ENCODE measurements at regions of chr1 and their contacts with region 1.

Region 1: GRCh38 chr1:246753670-246754535 is 29.7 kb downstream of the SCCPDH start:
- DNase-seq: peak; percentile 85
- H3K4me3 Mint-ChIP-seq: no peak overlapping the region
- H3K27ac Mint-ChIP-seq: no peak overlapping the region
- H3K4me1 Mint-ChIP-seq: peaks cover 10% of the 10 kb centered on the region
- H3K27me3 Mint-ChIP-seq: no peaks in the 10 kb centered on the region
- CTCF ChIP-seq: peak; percentile 98

Region 2: DNA sequence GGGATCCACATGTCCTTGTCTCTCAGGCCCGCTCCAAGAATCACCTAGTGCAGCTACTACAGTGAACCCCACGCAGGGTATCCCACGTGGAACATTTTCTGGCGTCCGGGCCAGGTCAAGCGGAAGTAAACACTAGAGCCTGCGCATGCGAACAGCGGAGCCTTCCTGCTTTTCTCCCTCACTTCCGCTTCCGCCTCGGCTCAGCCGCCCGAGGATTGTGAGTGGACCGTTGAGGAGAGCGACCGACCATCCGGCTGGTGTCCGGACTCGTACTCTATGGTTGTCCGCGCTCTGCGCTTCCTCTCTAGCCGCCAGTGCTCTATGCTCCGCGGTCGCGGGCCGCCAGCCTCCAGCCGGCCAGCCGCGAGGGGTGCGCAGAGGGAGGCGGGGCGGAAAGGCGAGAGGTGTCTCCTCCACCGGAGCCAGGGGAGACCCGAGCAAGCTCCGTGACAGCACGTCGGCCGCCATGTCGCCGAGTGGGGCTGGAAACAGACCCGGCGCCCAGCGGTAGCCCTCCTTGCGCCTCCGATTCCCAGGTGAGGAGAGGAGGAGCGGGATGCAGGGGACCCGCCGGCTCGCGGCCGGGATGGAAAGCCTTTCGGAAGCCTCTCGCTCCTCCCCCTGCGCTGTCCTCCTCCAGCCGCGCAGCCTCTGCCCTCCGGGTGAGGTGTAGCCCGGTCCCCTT is 187.6 kb before region 1 on chr1 and contains the starts of genes CNST and TFB2M:
- CTCF ChIA-PET with region 1: interaction called, 6 read pairs
- POLR2A ChIA-PET with region 1: interaction called, 3 read pairs
- intact Hi-C with region 1: loop called (anchors 1 kb)
- DNase-seq: peak; percentile 100
- H3K4me3 Mint-ChIP-seq: peak within 1 kb of the TSS; percentile 93
- H3K27ac Mint-ChIP-seq: peak within 1 kb of the TSS; percentile 97
- H3K4me1 Mint-ChIP-seq: peaks cover 34% of the 10 kb centered on the region
- H3K27me3 Mint-ChIP-seq: no peaks in the 10 kb centered on the region
- CTCF ChIP-seq: no peak
- total RNA-seq, gene CNST: 44.8 and 48.3 TPM in 2 replicates
- total RNA-seq, gene TFB2M: 38.3 and 52.0 TPM in 2 replicates

Region 3: DNA sequence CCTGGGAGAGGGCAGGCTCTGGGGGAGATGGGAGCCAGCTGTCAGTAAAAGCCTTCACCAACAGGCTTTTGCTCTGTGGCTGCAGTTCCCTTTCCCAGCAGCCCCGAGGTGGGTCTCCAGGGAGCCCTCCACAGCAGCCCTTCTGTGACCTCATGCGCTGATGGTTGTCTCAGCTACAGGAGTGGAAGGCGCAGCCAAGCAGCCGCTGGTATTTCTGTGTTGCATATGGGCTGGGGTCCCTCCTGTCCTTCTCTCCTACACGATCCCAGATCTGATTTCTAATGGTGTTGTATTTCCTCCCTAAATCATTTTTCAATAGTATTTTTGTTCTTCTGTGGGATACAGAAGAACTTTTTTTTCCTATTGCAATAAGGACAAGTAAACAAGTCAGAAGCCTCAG is 72.0 kb before region 1 on chr1:
- CTCF ChIA-PET with region 1: interaction called, 464 read pairs
- POLR2A ChIA-PET with region 1: interaction called, 3 read pairs
- intact Hi-C with region 1: no loop called
- DNase-seq: no peak
- H3K4me3 Mint-ChIP-seq: no peak overlapping the region
- H3K27ac Mint-ChIP-seq: no peak overlapping the region
- H3K4me1 Mint-ChIP-seq: no peaks in the 10 kb centered on the region
- H3K27me3 Mint-ChIP-seq: no peaks in the 10 kb centered on the region
- CTCF ChIP-seq: no peak

Region 4: GRCh38 chr1:246709835-246710234 is 44.1 kb before region 1 on chr1:
- CTCF ChIA-PET with region 1: interaction called, 28 read pairs
- POLR2A ChIA-PET with region 1: no interaction called
- intact Hi-C with region 1: no loop called
- DNase-seq: no peak
- H3K4me3 Mint-ChIP-seq: no peak overlapping the region
- H3K27ac Mint-ChIP-seq: no peak overlapping the region
- H3K4me1 Mint-ChIP-seq: peaks cover 20% of the 10 kb centered on the region
- H3K27me3 Mint-ChIP-seq: no peaks in the 10 kb centered on the region
- CTCF ChIP-seq: no peak

Region 5: DNA sequence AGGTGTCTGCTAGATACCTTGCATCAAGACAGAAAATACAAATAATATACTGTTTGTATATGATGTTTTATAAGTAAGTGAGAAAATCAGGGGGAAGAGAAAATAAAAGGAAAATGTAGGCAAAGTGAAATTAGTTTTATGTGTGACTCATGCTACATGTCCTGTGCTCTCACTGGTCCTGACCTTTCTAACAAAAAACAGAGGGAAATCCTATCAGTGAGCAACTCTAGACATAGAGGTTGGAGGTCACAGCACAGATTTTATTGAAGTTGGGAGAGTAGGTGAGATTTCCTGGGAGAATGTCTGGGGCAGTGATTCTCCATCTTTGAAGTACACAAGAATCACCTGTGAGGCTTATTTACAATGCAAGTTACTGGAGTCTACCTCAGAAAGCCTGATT is 20.2 kb before region 1 on chr1:
- CTCF ChIA-PET with region 1: interaction called, 19 read pairs
- POLR2A ChIA-PET with region 1: no interaction called
- intact Hi-C with region 1: no loop called
- DNase-seq: no peak
- H3K4me3 Mint-ChIP-seq: no peak overlapping the region
- H3K27ac Mint-ChIP-seq: no peak overlapping the region
- H3K4me1 Mint-ChIP-seq: no peaks in the 10 kb centered on the region
- H3K27me3 Mint-ChIP-seq: no peaks in the 10 kb centered on the region
- CTCF ChIP-seq: no peak

Region 6: GRCh38 chr1:246773213-246773641 is 19.3 kb after region 1 on chr1:
- CTCF ChIA-PET with region 1: interaction called, 64 read pairs
- POLR2A ChIA-PET with region 1: interaction called, 5 read pairs
- intact Hi-C with region 1: no loop called
- DNase-seq: no peak
- H3K4me3 Mint-ChIP-seq: no peak overlapping the region
- H3K27ac Mint-ChIP-seq: peak overlapping the region; percentile 36
- H3K4me1 Mint-ChIP-seq: peaks cover 18% of the 10 kb centered on the region
- H3K27me3 Mint-ChIP-seq: no peaks in the 10 kb centered on the region
- CTCF ChIP-seq: no peak

Region 7: GRCh38 chr1:246788895-246789338 is 35.0 kb after region 1 on chr1:
- CTCF ChIA-PET with region 1: no interaction called
- POLR2A ChIA-PET with region 1: no interaction called
- intact Hi-C with region 1: no loop called
- DNase-seq: no peak
- H3K4me3 Mint-ChIP-seq: no peak overlapping the region
- H3K27ac Mint-ChIP-seq: no peak overlapping the region
- H3K4me1 Mint-ChIP-seq: peaks cover 12% of the 10 kb centered on the region
- H3K27me3 Mint-ChIP-seq: no peaks in the 10 kb centered on the region
- CTCF ChIP-seq: no peak

Region 8: GRCh38 chr1:247487057-247487456 is 733.2 kb after region 1 on chr1:
- CTCF ChIA-PET with region 1: no interaction called
- POLR2A ChIA-PET with region 1: no interaction called
- intact Hi-C with region 1: loop called (anchors 10 kb)
- DNase-seq: peak; percentile 76
- H3K4me3 Mint-ChIP-seq: no peak overlapping the region
- H3K27ac Mint-ChIP-seq: no peak overlapping the region
- H3K4me1 Mint-ChIP-seq: peaks cover 11% of the 10 kb centered on the region
- H3K27me3 Mint-ChIP-seq: peaks cover 45% of the 10 kb centered on the region
- CTCF ChIP-seq: peak; percentile 84

Measured in MCF 10A (cell line).